A549 (cell line): ENCODE measurements at regions of chr1 and their contacts with region 1.

Region 1: DNA sequence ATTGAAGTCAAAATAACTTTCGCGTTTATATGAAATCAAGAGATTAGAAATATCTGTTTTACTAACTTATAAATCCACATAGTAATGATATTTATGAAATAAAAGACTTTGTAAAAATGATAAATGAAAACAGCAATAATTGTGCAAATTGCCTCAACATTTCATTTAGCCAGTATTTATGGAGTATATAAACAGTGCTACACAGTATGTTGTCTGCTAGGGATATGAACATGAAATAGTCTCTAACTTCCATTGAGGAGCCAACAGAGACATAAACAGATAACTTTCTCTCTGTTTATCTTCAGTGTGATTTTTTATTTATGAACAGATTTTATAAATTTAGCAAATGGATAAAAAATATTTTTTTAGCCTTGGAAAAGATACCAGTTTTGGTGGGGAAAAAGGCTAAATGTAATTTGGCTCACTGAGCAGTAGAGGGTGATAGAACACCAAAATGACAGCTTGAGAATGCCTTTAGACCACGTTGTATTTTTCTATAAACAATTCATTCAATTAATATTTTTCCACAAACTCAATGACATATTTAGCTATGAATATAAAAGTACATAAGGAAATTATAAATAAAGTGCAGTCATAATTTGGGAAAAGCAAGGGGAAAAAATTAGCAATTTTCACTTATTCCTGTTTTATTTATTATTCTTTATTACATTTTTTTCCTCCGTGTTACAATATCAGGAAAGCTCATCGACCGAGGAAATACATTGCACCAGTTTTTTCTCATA is 47.5 kb upstream of the EEIG2 start:
- DNase-seq: peak in 1 of 2 experiments; percentile 34
- ATAC-seq: 0 out of 6 replicates have a peak, but pooled peaks of 1 of the 2 experiments have one; percentile 49
- H3K4me3 ChIP-seq: no peak overlapping the region
- H3K27ac ChIP-seq: no peak overlapping the region
- H3K4me1 ChIP-seq: no peaks in the 10 kb centered on the region
- CTCF ChIP-seq: peak; percentile 79
- EP300 ChIP-seq: no peak
- POLR2A ChIP-seq: no peak
- RAD21 ChIP-seq: peak; percentile 83 to 88

Region 2: DNA sequence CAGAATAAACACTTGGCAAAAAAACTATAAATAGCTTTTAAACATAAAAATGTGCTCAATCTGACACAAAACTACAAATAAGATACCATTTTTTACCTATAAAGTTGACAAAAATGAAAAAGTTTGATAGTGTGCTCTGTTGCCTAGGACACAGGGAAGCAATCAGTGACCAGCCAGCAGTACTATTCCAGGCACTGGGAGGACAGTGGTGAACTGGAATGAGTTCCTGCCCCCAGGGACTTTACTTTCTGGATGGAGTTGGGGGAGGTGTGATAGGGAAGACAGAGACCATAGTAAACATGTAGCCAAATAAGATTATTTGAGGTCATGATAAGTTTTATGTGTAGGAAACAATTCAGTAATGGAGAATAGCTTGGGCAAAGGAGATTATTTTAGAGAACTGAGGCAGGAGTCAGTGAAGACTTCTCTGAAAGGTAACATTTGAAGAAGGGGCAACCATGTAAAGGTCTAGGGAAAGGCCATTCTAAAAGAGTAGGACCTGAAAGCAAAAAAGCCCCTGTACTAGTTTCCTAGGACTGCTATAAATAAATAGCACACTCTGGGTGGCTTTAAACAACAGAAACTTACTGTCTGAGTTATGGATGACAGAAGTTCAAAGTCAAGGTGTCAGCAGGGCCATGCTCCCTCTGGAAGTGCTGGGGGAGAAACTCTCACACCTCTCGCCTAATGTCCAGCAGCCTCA is 89.4 kb after region 1 on chr1:
- CTCF ChIA-PET with region 1: no interaction called
- POLR2A ChIA-PET with region 1: no interaction called
- DNase-seq: no peak
- ATAC-seq: no peak
- H3K4me3 ChIP-seq: no peak overlapping the region
- H3K27ac ChIP-seq: no peak overlapping the region
- H3K4me1 ChIP-seq: peaks cover 8% of the 10 kb centered on the region; the same call in 1 of the 3 replicates
- CTCF ChIP-seq: no peak
- EP300 ChIP-seq: no peak
- POLR2A ChIP-seq: no peak
- RAD21 ChIP-seq: no peak

Region 3: DNA sequence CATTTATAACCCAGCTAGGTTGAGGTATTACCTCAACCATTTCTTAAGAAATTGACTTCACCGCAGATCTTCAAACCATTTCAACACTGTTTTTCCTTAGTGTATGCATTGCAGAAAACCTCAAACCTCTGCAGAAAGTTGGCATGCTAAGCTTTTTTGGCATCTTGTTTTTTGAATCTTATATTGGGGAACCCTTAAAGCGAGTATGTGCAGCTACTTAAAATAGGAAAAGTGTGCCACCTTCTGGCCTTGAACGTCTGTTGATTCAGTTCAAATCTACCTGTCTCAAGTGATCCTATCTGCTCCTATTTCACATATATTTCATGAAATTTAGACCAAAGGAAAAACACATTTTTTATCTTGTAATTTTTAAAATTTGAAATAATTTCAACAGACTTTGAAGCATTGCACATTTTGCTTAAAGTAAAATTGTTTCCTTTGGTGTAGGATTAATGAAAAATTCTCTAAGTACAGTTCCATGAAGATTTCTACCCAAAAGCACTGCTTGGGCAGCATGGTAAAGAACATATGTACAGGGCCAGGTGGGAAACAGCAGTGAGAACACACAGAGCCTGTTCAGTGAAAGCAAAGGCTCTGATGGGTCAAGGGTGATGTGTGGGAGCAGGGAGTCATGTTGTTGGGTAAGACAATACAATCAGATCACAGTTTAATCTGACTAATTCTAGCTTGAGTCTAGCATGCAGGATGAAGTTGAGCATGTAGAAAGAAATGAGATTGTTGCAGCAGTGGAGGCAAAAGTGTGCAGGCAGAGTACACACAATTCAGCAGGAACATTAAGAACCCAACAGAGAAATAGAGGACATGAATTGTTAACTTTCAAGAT is 131.3 kb after region 1 on chr1:
- CTCF ChIA-PET with region 1: interaction called, 55 read pairs
- POLR2A ChIA-PET with region 1: interaction called, 5 read pairs
- DNase-seq: peak; percentile 38 to 63
- ATAC-seq: peak; percentile 82 to 90
- H3K4me3 ChIP-seq: no peak overlapping the region
- H3K27ac ChIP-seq: no peak overlapping the region
- H3K4me1 ChIP-seq: peaks cover 6% of the 10 kb centered on the region; the same call in 1 of the 3 replicates
- CTCF ChIP-seq: peak; percentile 69
- EP300 ChIP-seq: no peak
- POLR2A ChIP-seq: no peak
- RAD21 ChIP-seq: peak; percentile 73 to 81